GM12878 (cell line): ENCODE measurements at regions of chr1 and their contacts with region 1.

Region 1: GRCh38 chr1:170200621-170201397 is 55.0 kb downstream of the NTMT2 start:
- DNase-seq: no peak
- ATAC-seq: no peak
- H3K4me3 ChIP-seq: no peak overlapping the region
- H3K27ac ChIP-seq: no peak overlapping the region
- H3K4me1 ChIP-seq: no peaks in the 10 kb centered on the region
- H3K27me3 ChIP-seq: no peaks in the 10 kb centered on the region
- CTCF ChIP-seq: no peak
- EP300 ChIP-seq: no peak
- POLR2A ChIP-seq: no peak
- RAD21 ChIP-seq: no peak

Region 2: GRCh38 chr1:170214117-170215032 is 13.6 kb after region 1 on chr1:
- CTCF ChIA-PET with region 1: no interaction called
- POLR2A ChIA-PET with region 1: interaction called, 4 read pairs
- RAD21 ChIA-PET with region 1: no interaction called
- SMC1A ChIA-PET with region 1: interaction called, 12 read pairs
- in situ Hi-C with region 1: no loop called
- intact Hi-C with region 1: no loop called
- DNase-seq: peak; percentile 32
- ATAC-seq: peak; percentile 94
- H3K4me3 ChIP-seq: no peak overlapping the region; the same call in 1 of the 2 replicates
- H3K27ac ChIP-seq: no peak overlapping the region; the same call in 1 of the 2 replicates
- H3K4me1 ChIP-seq: peaks cover 11% of the 10 kb centered on the region; the same call in 1 of the 2 replicates
- H3K27me3 ChIP-seq: no peaks in the 10 kb centered on the region
- CTCF ChIP-seq: no peak
- EP300 ChIP-seq: peak in 1 of 2 experiments; percentile 22; a peak in 1 of 4 replicates
- POLR2A ChIP-seq: no peak
- RAD21 ChIP-seq: no peak